Activated CD4-positive, alpha-beta T cell treated with anti-CD3 and anti-CD28 coated beads for 36 hours (primary cell): ENCODE measurements at regions of chr9 and their contacts with region 1.

Region 1: DNA sequence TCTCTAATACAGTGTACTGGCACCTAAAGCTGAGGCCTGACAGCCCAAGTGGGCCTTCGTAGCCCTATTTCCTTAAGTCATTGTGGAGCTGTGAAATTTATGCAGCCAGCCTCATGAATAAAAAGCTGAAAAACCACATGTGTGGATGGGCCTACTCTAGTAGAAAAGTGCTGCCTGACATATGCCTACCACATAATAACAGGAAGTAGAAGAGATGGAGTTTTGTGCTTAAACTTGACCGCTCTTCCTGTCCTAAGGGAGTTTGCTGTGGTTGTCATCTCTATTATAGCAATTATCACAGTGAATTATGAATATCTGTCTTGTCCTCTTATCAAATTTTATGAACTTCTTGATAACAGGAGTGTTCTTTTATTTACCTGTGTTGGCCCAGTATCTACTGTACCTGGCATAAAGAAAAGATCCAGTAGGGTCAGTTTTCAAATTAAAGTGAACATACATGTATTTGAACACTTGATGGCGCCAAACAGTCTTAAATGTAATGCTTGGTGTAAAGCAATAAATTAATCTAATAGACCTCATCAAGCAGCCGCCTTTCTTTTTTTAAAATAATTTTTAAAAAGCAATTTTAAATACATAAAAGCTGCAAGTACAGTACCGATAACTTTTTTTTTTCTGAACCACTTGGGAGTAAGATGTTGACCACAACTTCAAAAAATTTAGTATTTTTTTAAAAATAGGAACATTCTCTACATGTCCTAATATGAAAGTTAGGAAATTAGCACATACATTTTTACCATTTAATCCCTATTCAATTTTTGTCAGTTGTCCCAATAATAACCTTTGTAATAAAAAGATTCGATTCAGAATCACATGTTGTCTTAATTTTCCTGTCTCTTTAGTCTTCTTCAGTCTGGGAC is 51.0 kb downstream of the FKTN start:
- DNase-seq: no peak
- ATAC-seq: peak; percentile 51
- H3K4me3 Mint-ChIP-seq: no peak overlapping the region
- H3K27ac Mint-ChIP-seq: no peak overlapping the region
- H3K4me1 Mint-ChIP-seq: no peaks in the 10 kb centered on the region
- H3K27me3 Mint-ChIP-seq: no peaks in the 10 kb centered on the region

Region 2: DNA sequence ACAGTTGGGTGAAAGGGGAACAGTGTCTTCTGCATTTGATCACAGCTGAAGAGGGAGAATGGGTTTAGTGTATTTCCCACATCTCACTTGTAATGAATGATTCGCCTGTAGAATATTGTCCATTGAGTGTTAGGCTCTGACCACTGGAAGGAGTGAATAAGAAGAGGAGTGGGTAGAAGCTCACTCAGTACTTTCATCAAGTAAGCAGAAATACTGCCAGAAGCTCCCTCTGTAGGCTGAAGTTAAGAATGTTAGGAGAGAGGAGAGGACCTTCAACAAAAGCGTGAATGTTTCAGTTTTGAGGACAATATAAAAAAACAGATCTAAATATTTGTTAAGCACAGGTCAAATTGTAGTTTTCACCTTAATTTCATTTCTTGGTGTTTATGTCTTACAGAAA is 133.7 kb before region 1 on chr9:
- CTCF ChIA-PET with region 1: no interaction called
- POLR2A ChIA-PET with region 1: no interaction called
- intact Hi-C with region 1: no loop called
- DNase-seq: no peak
- ATAC-seq: peak; percentile 42
- H3K4me3 Mint-ChIP-seq: no peak overlapping the region
- H3K27ac Mint-ChIP-seq: no peak overlapping the region
- H3K4me1 Mint-ChIP-seq: no peaks in the 10 kb centered on the region
- H3K27me3 Mint-ChIP-seq: no peaks in the 10 kb centered on the region

Region 3: GRCh38 chr9:105621001-105621400 is 12.0 kb after region 1 on chr9:
- CTCF ChIA-PET with region 1: no interaction called
- POLR2A ChIA-PET with region 1: no interaction called
- intact Hi-C with region 1: no loop called
- DNase-seq: no peak
- ATAC-seq: no peak
- H3K4me3 Mint-ChIP-seq: no peak overlapping the region
- H3K27ac Mint-ChIP-seq: no peak overlapping the region
- H3K4me1 Mint-ChIP-seq: no peaks in the 10 kb centered on the region
- H3K27me3 Mint-ChIP-seq: no peaks in the 10 kb centered on the region

Region 4: DNA sequence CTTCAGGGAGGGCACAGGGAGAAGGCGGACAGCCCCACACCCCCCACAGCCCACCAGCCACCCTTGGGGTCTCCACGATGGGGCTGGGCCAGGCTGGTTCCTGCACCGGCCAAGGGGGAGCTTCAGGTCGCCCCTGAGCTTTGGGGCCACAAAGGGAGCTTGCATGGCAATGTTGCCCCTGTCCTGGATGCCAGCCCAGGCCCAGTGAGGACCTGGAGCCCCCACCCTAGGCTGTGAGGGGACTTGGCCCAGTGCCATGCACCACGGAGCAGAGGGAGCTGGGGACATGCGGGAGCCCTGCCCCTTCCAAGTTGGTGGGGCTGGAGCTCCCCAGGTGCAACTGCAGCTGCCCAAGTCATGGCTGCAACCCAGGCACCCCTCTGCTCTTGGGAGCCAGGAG is 103.8 kb after region 1 on chr9:
- CTCF ChIA-PET with region 1: interaction called, 10 read pairs
- POLR2A ChIA-PET with region 1: no interaction called
- intact Hi-C with region 1: no loop called
- DNase-seq: no peak
- ATAC-seq: no peak
- H3K4me3 Mint-ChIP-seq: no peak overlapping the region
- H3K27ac Mint-ChIP-seq: no peak overlapping the region
- H3K4me1 Mint-ChIP-seq: peaks cover 8% of the 10 kb centered on the region
- H3K27me3 Mint-ChIP-seq: no peaks in the 10 kb centered on the region

Region 5: DNA sequence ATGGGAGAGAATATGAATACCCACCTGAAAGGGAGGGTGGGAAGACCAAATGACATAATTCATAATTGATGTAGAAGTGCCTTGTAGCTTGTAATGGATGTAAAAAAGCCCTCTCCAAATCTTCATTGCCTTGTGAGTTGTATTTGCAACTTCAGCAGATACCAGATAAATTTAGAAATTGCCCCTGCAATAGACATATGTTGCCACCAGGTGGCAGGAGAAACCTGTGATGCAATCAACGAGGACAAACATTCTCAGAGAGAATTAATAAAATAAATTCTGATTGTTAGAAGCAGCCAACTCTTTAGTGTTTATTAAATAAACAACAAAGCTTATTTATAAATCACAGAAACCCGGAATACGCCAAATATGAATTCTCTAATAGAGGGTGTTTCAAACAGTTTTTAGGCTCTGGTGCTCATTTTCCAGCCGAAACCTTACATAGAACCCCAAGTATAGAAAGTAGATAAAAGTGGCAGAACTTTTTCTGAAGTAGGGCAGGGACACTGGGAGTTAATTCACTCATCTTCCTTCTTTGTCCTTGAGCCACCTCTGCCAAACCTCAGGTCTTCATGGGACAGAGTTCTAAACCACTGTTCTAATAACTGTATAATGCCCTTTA is 233.2 kb after region 1 on chr9:
- CTCF ChIA-PET with region 1: no interaction called
- POLR2A ChIA-PET with region 1: no interaction called
- intact Hi-C with region 1: loop called in 1 of 2 experiments (anchors 1 kb)
- DNase-seq: peak; percentile 54
- ATAC-seq: no peak
- H3K4me3 Mint-ChIP-seq: no peak overlapping the region
- H3K27ac Mint-ChIP-seq: no peak overlapping the region
- H3K4me1 Mint-ChIP-seq: no peaks in the 10 kb centered on the region
- H3K27me3 Mint-ChIP-seq: no peaks in the 10 kb centered on the region

Region 6: DNA sequence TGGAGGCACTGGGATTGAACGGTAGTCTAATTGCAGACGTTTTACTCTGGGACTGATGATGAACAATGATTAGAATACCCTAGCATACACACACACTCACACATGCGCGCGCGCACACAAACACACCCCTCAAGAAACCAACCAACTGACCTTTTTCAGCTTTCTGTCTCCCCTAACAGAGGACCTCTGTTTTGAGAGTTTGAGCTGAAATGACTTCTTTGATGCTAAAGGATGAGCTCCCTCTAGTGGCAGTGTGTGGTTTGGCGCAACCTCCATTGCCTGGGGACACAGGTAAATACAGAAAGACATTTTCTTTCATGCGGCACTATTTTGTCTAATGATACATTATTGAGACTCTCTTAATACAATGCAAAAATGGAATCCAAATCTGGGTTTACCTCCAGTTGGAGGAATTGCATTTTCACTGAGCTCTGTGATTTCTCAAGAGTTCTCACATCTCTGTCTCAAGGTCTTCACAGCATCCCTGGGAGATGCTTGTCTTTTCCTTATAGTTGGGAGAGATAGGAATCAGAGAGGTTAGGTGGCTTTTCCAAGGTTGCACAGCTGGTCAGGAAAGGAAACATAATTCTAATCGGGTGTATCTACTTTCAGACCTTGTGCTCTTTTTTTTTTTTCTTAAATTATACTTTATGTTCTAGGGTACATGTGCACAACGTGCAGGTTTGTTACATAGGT is 272.8 kb after region 1 on chr9:
- CTCF ChIA-PET with region 1: interaction called, 5 read pairs
- POLR2A ChIA-PET with region 1: no interaction called
- intact Hi-C with region 1: loop called (anchors 2 to 5 kb)
- DNase-seq: peak; percentile 81
- ATAC-seq: peak; percentile 73
- H3K4me3 Mint-ChIP-seq: no peak overlapping the region
- H3K27ac Mint-ChIP-seq: no peak overlapping the region
- H3K4me1 Mint-ChIP-seq: peaks cover 10% of the 10 kb centered on the region
- H3K27me3 Mint-ChIP-seq: no peaks in the 10 kb centered on the region